ENCODE measurements at regions of chr1 and their contacts with region 1.

Region 1: GRCh38 chr1:201224666-201225370 is 34.2 kb downstream of the IGFN1 start:
- H3K4me3 ChIP-seq: no peak overlapping the region
- H3K27ac ChIP-seq: no peak overlapping the region
- H3K4me1 ChIP-seq: no peaks in the 10 kb centered on the region
- CTCF ChIP-seq: no peak

Region 2: GRCh38 chr1:201085916-201086735 is 138.7 kb before region 1 on chr1:
- CTCF ChIA-PET with region 1: interaction called, 11 read pairs
- POLR2A ChIA-PET with region 1: no interaction called
- H3K4me3 ChIP-seq: no peak overlapping the region
- H3K27ac ChIP-seq: no peak overlapping the region
- H3K4me1 ChIP-seq: no peaks in the 10 kb centered on the region
- CTCF ChIP-seq: peak; percentile 60

Region 3: GRCh38 chr1:201212561-201212971 is 12.3 kb before region 1 on chr1:
- CTCF ChIA-PET with region 1: interaction called, 10 read pairs
- POLR2A ChIA-PET with region 1: no interaction called
- H3K4me3 ChIP-seq: no peak overlapping the region
- H3K27ac ChIP-seq: no peak overlapping the region
- H3K4me1 ChIP-seq: no peaks in the 10 kb centered on the region
- CTCF ChIP-seq: no peak